Endothelial cell of umbilical vein (primary cell): ENCODE measurements at regions of chr10 and their contacts with region 1.

Region 1: GRCh38 chr10:110076559-110077318 is 69.0 kb downstream of the ADD3 start:
- DNase-seq: peak; percentile 91
- H3K4me3 ChIP-seq: peak overlapping the region in 1 of 3 experiments; percentile 23
- H3K27ac ChIP-seq: peak overlapping the region; percentile 83
- H3K4me1 ChIP-seq: peaks cover 53% of the 10 kb centered on the region
- H3K27me3 ChIP-seq: no peaks in the 10 kb centered on the region
- CTCF ChIP-seq: no peak
- POLR2A ChIP-seq: no peak

Region 2: DNA sequence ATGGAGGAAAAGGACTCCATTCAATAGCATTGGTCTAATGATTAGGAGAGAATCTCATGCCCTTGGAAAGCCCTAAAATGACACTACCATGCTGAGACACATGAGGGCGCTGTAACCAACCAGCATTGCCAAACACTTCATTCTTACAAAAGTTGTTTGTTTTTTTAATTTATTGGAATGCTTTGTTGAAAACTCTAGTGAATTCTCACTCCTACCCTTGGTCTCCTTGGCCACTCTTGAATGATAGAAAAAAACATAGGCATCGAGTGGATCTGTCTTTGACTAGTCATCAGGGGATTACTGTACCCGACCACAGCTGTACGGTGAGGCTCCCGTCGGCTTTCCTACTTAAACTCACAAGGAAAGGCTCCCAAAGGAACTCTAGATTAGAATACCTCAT is 98.3 kb before region 1 on chr10:
- CTCF ChIA-PET with region 1: interaction called, 16 read pairs
- POLR2A ChIA-PET with region 1: no interaction called
- dilution Hi-C with region 1: no loop called
- intact Hi-C with region 1: no loop called
- DNase-seq: peak; percentile 66
- H3K4me3 ChIP-seq: no peak overlapping the region
- H3K27ac ChIP-seq: no peak overlapping the region
- H3K4me1 ChIP-seq: no peaks in the 10 kb centered on the region
- H3K27me3 ChIP-seq: no peaks in the 10 kb centered on the region
- CTCF ChIP-seq: peak; percentile 71 to 77
- POLR2A ChIP-seq: no peak

Region 3: GRCh38 chr10:110042181-110042580 is 34.6 kb before region 1 on chr10:
- CTCF ChIA-PET with region 1: interaction called, 3 read pairs
- POLR2A ChIA-PET with region 1: no interaction called
- dilution Hi-C with region 1: no loop called
- intact Hi-C with region 1: loop called (anchors 2 kb)
- DNase-seq: peak; percentile 68
- H3K4me3 ChIP-seq: peak overlapping the region in 1 of 3 experiments; percentile 17
- H3K27ac ChIP-seq: no peak overlapping the region
- H3K4me1 ChIP-seq: peaks cover 10% of the 10 kb centered on the region
- H3K27me3 ChIP-seq: no peaks in the 10 kb centered on the region
- CTCF ChIP-seq: no peak
- POLR2A ChIP-seq: no peak

Region 4: GRCh38 chr10:110059925-110060324 is 16.8 kb before region 1 on chr10:
- CTCF ChIA-PET with region 1: interaction called, 9 read pairs
- POLR2A ChIA-PET with region 1: interaction called, 5 read pairs
- dilution Hi-C with region 1: no loop called
- intact Hi-C with region 1: loop called (anchors 2 kb)
- DNase-seq: peak; percentile 47
- H3K4me3 ChIP-seq: no peak overlapping the region
- H3K27ac ChIP-seq: no peak overlapping the region
- H3K4me1 ChIP-seq: peaks cover 14% of the 10 kb centered on the region
- H3K27me3 ChIP-seq: no peaks in the 10 kb centered on the region
- CTCF ChIP-seq: no peak
- POLR2A ChIP-seq: no peak

Region 5: GRCh38 chr10:110225756-110226542 is 149.2 kb after region 1 on chr10:
- CTCF ChIA-PET with region 1: no interaction called
- POLR2A ChIA-PET with region 1: no interaction called
- dilution Hi-C with region 1: no loop called
- intact Hi-C with region 1: loop called (anchors 5 kb)
- DNase-seq: peak; percentile 89
- H3K4me3 ChIP-seq: peak overlapping the region; percentile 74 to 92 (median 75)
- H3K27ac ChIP-seq: no peak overlapping the region
- H3K4me1 ChIP-seq: peaks cover 8% of the 10 kb centered on the region
- H3K27me3 ChIP-seq: no peaks in the 10 kb centered on the region
- CTCF ChIP-seq: peak; percentile 54 to 79
- POLR2A ChIP-seq: no peak